Endothelial cell of umbilical vein (primary cell): ENCODE measurements at regions of chr2 and their contacts with region 1.

Region 1: GRCh38 chr2:135004005-135004746 is 43.1 kb downstream of the MAP3K19 start:
- DNase-seq: peak; percentile 66
- H3K4me3 ChIP-seq: no peak overlapping the region
- H3K27ac ChIP-seq: no peak overlapping the region
- H3K4me1 ChIP-seq: no peaks in the 10 kb centered on the region
- H3K27me3 ChIP-seq: peaks cover 13 to 18% of the 10 kb centered on the region in 2 experiments
- CTCF ChIP-seq: peak; percentile 95 to 96
- POLR2A ChIP-seq: no peak

Region 2: GRCh38 chr2:134564549-134564948 is 439.6 kb before region 1 on chr2:
- CTCF ChIA-PET with region 1: no interaction called
- POLR2A ChIA-PET with region 1: no interaction called
- dilution Hi-C with region 1: no loop called
- intact Hi-C with region 1: no loop called
- DNase-seq: no peak
- H3K4me3 ChIP-seq: no peak overlapping the region
- H3K27ac ChIP-seq: no peak overlapping the region
- H3K4me1 ChIP-seq: no peaks in the 10 kb centered on the region
- H3K27me3 ChIP-seq: no peaks in the 10 kb centered on the region
- CTCF ChIP-seq: no peak
- POLR2A ChIP-seq: no peak

Region 3: DNA sequence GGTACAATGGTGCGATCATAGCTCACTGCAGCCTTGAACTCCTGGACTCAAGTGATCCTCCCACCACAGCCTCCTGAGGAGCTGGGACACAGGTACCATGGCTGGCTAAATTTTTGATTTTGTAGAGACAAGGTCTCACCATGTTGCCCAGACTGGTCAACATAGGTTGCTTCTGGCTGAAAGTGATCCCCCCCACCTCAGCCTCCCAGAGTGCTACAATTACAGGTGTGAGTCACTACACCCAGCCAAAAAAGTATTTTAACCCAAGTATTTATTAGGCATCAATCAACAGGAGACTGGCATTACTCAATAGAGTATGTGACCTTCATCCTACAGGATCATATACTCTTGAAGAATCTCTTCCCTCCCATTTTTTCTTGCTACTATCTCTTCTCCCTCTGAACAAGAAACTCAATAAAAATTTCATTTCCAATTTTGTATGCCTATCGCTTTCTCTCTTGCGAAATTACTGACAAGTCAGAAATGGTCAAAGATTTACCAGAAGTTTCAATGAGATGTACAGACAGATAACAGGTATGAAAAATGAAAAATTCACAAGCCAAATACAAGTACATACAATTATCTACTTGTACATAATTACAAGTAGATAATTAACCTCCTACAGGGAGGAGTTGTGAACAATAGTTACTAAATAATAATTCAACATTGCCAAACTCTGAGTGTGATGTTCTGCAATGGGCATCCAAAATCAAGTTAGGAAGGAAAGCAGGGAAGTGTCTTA is 120.5 kb before region 1 on chr2:
- CTCF ChIA-PET with region 1: no interaction called
- POLR2A ChIA-PET with region 1: no interaction called
- dilution Hi-C with region 1: no loop called
- intact Hi-C with region 1: no loop called
- DNase-seq: no peak
- H3K4me3 ChIP-seq: no peak overlapping the region
- H3K27ac ChIP-seq: no peak overlapping the region
- H3K4me1 ChIP-seq: no peaks in the 10 kb centered on the region
- H3K27me3 ChIP-seq: no peaks in the 10 kb centered on the region
- CTCF ChIP-seq: no peak
- POLR2A ChIP-seq: no peak

Region 4: GRCh38 chr2:134927195-134927594 is 77.0 kb before region 1 on chr2:
- CTCF ChIA-PET with region 1: no interaction called
- POLR2A ChIA-PET with region 1: no interaction called
- dilution Hi-C with region 1: no loop called
- intact Hi-C with region 1: no loop called
- DNase-seq: no peak
- H3K4me3 ChIP-seq: no peak overlapping the region
- H3K27ac ChIP-seq: no peak overlapping the region
- H3K4me1 ChIP-seq: peaks cover 6% of the 10 kb centered on the region
- H3K27me3 ChIP-seq: no peaks in the 10 kb centered on the region
- CTCF ChIP-seq: no peak
- POLR2A ChIP-seq: no peak

Region 5: DNA sequence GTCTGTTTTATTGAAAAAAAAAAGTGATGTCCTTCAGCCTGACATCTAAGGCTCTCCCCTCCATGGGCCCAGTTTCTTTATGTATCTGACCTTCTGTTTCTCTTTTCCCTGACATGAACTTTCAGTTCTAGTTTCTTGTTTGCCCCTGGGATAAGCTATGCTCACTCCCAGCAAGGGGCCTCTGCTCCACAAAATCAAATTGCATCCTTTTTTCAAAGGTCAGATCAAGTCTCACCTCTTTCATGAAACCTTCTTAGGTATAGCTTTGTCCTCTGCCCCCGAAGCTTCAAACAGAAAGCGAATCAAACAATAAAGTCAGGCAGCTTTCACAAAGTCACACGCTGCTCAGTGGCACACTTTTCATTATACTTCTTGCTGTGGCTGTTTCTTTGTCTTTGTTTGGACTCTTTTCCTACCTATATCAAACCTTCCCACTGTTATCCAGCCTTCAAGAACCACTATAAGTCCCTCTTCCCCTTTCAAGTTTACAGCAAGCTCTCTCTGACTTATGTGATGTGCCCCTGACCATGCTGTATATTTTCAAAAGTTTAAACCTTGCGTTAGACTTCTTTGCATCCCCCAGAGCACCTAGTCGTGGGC is 19.8 kb after region 1 on chr2:
- CTCF ChIA-PET with region 1: interaction called, 27 read pairs
- POLR2A ChIA-PET with region 1: no interaction called
- dilution Hi-C with region 1: no loop called
- intact Hi-C with region 1: no loop called
- DNase-seq: no peak
- H3K4me3 ChIP-seq: no peak overlapping the region
- H3K27ac ChIP-seq: no peak overlapping the region
- H3K4me1 ChIP-seq: no peaks in the 10 kb centered on the region
- H3K27me3 ChIP-seq: peaks cover 6 to 9% of the 10 kb centered on the region in 2 experiments
- CTCF ChIP-seq: no peak
- POLR2A ChIP-seq: no peak

Region 6: DNA sequence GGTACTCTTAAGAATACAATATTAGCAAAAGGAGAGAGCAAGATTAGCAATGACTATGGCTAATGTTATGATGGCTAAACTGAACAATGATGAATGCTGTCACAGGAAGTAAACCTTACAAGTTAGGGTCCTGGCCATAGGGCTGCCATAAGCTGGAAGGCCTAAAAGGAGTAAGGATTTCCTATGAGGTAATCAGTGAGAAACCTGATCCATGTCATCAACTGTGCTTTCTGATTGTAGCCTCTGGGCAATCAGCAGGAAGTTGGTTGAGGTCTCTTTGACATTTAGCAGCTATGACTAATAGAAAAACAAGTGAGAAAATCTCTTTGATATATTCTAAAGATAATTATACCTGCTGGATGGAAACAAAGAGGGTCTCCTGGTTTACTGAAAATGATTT is 240.9 kb after region 1 on chr2:
- CTCF ChIA-PET with region 1: no interaction called
- POLR2A ChIA-PET with region 1: no interaction called
- dilution Hi-C with region 1: no loop called
- intact Hi-C with region 1: no loop called
- DNase-seq: peak; percentile 92
- H3K4me3 ChIP-seq: no peak overlapping the region
- H3K27ac ChIP-seq: peak overlapping the region; percentile 60
- H3K4me1 ChIP-seq: peaks cover 9% of the 10 kb centered on the region
- H3K27me3 ChIP-seq: no peaks in the 10 kb centered on the region
- CTCF ChIP-seq: no peak
- POLR2A ChIP-seq: no peak

Region 7: GRCh38 chr2:135473567-135473966 is 469.4 kb after region 1 on chr2:
- CTCF ChIA-PET with region 1: interaction called, 31 read pairs
- POLR2A ChIA-PET with region 1: no interaction called
- dilution Hi-C with region 1: no loop called
- intact Hi-C with region 1: loop called (anchors 2 kb)
- DNase-seq: peak; percentile 42
- H3K4me3 ChIP-seq: no peak overlapping the region
- H3K27ac ChIP-seq: no peak overlapping the region
- H3K4me1 ChIP-seq: no peaks in the 10 kb centered on the region
- H3K27me3 ChIP-seq: no peaks in the 10 kb centered on the region
- CTCF ChIP-seq: peak; percentile 56 to 69
- POLR2A ChIP-seq: no peak

Region 8: DNA sequence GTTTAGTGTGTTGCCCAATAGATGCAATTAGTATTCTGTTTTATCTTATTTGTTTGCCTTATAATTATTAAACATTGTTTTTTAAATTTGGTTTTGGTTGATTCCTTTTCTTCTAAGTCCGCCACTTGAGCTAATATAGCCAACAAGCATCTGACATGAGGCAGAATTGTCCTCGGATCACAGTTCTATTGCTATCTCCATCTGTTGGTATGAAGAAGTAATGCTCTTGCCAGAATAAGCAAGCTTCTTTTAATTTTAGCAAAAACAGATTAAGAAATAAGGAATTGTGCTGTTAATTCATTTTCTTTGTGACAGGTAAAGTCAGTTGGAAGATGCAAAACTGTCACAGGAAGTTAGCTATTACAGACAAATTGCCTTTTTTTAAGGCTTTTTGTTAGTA is 581.4 kb after region 1 on chr2:
- CTCF ChIA-PET with region 1: interaction called, 17 read pairs
- POLR2A ChIA-PET with region 1: no interaction called
- dilution Hi-C with region 1: no loop called
- intact Hi-C with region 1: no loop called
- DNase-seq: no peak
- H3K4me3 ChIP-seq: no peak overlapping the region
- H3K27ac ChIP-seq: no peak overlapping the region
- H3K4me1 ChIP-seq: no peaks in the 10 kb centered on the region
- H3K27me3 ChIP-seq: no peaks in the 10 kb centered on the region
- CTCF ChIP-seq: no peak
- POLR2A ChIP-seq: no peak

Region 9: DNA sequence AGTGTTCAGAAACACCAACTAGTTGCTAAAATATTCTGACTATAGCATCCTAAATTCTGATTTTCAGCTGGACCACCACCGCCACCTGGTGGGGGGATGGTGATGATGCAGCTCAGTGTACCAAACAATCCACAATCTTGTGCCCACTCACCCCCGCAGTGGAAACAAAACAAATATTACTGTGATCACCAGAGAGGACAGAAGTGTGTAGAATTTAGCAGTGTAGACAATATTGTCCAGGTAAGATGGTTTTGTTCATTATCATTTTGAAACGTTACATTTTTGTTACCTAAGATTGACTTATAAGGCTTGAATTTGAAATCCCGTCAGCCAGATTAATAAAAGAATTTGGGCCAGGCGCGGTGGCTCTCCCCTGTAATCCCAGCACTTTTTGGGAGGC is 705.8 kb after region 1 on chr2:
- CTCF ChIA-PET with region 1: interaction called, 231 read pairs
- POLR2A ChIA-PET with region 1: no interaction called
- dilution Hi-C with region 1: no loop called
- intact Hi-C with region 1: loop called (anchors 1 kb)
- DNase-seq: peak; percentile 60
- H3K4me3 ChIP-seq: no peak overlapping the region
- H3K27ac ChIP-seq: no peak overlapping the region
- H3K4me1 ChIP-seq: no peaks in the 10 kb centered on the region
- H3K27me3 ChIP-seq: no peaks in the 10 kb centered on the region
- CTCF ChIP-seq: peak; percentile 76 to 88
- POLR2A ChIP-seq: no peak

Region 10: GRCh38 chr2:136378712-136379595 is 1374.8 kb after region 1 on chr2:
- CTCF ChIA-PET with region 1: interaction called, 3 read pairs
- POLR2A ChIA-PET with region 1: no interaction called
- dilution Hi-C with region 1: no loop called
- intact Hi-C with region 1: loop called (anchors 5 kb)
- DNase-seq: peak; percentile 64
- H3K4me3 ChIP-seq: no peak overlapping the region
- H3K27ac ChIP-seq: no peak overlapping the region
- H3K4me1 ChIP-seq: peaks cover 7% of the 10 kb centered on the region
- H3K27me3 ChIP-seq: no peaks in the 10 kb centered on the region
- CTCF ChIP-seq: peak; percentile 68 to 77
- POLR2A ChIP-seq: no peak